Activated T-helper 1 cell treated with anti-CD3 and anti-CD28 coated beads, Interleukin-12 subunit alpha, Interleukin-12 subunit beta, Interleukin-2, Interleukin-4 antibody, amounts not matched to agents 30 ng/mL and 10 ng/mL and 1 ng/mL, durations not matched to agents 14 hours and 24 hours and 36 hours (primary cell): ENCODE measurements at regions of chr2 and their contacts with region 1.

Region 1: DNA sequence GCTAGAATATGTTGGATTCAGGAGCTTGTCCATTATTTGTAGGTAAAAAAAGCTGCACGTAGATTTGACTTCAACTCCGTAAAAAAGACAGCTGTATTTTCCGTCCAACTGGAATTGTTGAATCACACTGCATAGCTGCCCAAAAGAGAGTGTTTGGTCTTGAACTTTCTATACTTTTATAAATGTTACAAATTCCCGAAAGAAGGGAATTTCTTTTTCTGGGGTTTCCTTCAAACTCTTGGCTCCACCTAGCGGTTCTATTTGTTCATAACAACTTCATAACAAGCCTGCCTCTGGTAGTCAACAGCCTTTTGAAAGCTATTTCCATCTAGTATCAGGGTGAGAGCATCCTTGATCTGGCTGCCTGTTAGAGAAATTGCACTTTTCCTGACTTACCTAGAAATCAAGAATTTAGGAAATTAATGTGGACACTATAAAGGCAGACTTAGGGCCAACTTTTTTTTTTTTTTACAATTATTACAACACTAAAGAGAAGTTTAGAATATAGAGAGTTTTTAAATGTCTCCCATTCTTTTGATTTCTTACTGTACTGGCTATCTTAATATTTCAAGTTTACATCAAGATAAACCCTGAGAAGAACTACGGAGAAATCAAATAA is 48.1 kb downstream of the TMEM185B start:
- DNase-seq: peak; percentile 18
- H3K4me3 Mint-ChIP-seq: no peak overlapping the region
- H3K27ac Mint-ChIP-seq: no peak overlapping the region
- H3K4me1 Mint-ChIP-seq: peaks cover 47% of the 10 kb centered on the region
- H3K27me3 Mint-ChIP-seq: peaks cover 7% of the 10 kb centered on the region

Region 2: DNA sequence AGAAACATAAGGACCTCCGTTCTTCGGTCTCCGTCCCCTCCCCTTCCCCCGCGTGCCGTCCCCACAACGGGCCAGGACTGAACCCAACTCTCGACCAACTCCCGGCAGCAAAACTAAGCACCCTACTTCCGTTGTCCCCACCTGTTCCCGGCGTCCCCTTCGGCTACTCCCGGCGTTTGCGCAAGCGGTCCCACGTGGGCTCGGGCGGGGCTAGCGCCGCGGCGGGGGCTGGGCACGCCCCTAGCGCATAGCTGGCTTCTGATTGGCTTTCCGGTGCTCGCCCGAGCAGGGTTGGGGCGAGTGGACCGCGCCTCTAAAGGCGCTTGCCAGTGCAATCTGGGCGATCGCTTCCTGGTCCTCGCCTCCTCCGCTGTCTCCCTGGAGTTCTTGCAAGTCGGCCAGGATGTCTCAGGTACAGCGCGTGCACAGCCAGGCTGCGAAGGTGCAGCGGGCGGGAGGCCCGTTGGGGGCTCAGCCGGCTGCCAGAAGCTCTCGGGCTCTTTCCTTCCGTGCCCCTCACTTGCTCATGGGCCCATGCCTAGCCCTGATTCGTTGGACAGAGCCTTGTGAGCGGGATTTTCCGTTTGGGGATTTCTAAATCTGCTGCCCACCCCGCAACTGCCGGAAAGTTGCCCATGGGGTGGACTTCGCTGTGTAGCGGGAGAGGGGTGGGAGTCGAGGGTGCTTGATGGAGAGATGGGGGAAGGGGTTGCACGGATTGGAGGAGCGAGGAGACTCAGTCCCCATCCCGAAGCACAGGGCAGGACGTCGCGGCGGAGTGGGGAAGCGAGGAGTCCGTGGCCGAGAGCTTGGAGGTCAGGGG is 808.2 kb before region 1 on chr2 and contains the starts of genes C2orf76 and DBI:
- intact Hi-C with region 1: loop called (anchors 5 kb)
- DNase-seq: peak; percentile 93
- H3K4me3 Mint-ChIP-seq: peak within 1 kb of the TSS; percentile 99
- H3K27ac Mint-ChIP-seq: peak within 1 kb of the TSS; percentile 99
- H3K4me1 Mint-ChIP-seq: peaks cover 46% of the 10 kb centered on the region
- H3K27me3 Mint-ChIP-seq: no peaks in the 10 kb centered on the region
- total RNA-seq, gene C2orf76: 10.3 and 10.7 TPM in 2 replicates
- total RNA-seq, gene DBI: 142 and 146 TPM in 2 replicates

Region 3: GRCh38 chr2:119702918-119703401 is 472.1 kb before region 1 on chr2:
- intact Hi-C with region 1: loop called (anchors 1 kb)
- DNase-seq: peak; percentile 56
- H3K4me3 Mint-ChIP-seq: no peak overlapping the region
- H3K27ac Mint-ChIP-seq: no peak overlapping the region
- H3K4me1 Mint-ChIP-seq: peaks cover 3% of the 10 kb centered on the region
- H3K27me3 Mint-ChIP-seq: peaks cover 2% of the 10 kb centered on the region

Region 4: GRCh38 chr2:119826370-119826961 is 348.6 kb before region 1 on chr2:
- intact Hi-C with region 1: loop called (anchors 2 kb)
- DNase-seq: peak; percentile 19
- H3K4me3 Mint-ChIP-seq: no peak overlapping the region
- H3K27ac Mint-ChIP-seq: no peak overlapping the region
- H3K4me1 Mint-ChIP-seq: peaks cover 17% of the 10 kb centered on the region
- H3K27me3 Mint-ChIP-seq: no peaks in the 10 kb centered on the region

Region 5: GRCh38 chr2:120037995-120038541 is 137.0 kb before region 1 on chr2:
- intact Hi-C with region 1: no loop called
- DNase-seq: no peak
- H3K4me3 Mint-ChIP-seq: no peak overlapping the region
- H3K27ac Mint-ChIP-seq: no peak overlapping the region
- H3K4me1 Mint-ChIP-seq: no peaks in the 10 kb centered on the region
- H3K27me3 Mint-ChIP-seq: peaks cover 5% of the 10 kb centered on the region

Region 6: GRCh38 chr2:120109186-120110061 is 65.6 kb before region 1 on chr2:
- intact Hi-C with region 1: loop called (anchors 1 kb)
- DNase-seq: peak; percentile 13
- H3K4me3 Mint-ChIP-seq: peak overlapping the region; percentile 29
- H3K27ac Mint-ChIP-seq: no peak overlapping the region
- H3K4me1 Mint-ChIP-seq: peaks cover 16% of the 10 kb centered on the region
- H3K27me3 Mint-ChIP-seq: peaks cover 14% of the 10 kb centered on the region

Region 7: GRCh38 chr2:120252225-120253021 is 77.4 kb after region 1 on chr2 and contains the start of gene RALB:
- intact Hi-C with region 1: loop called (anchors 1 kb)
- DNase-seq: peak; percentile 99
- H3K4me3 Mint-ChIP-seq: peak within 1 kb of the TSS; percentile 98
- H3K27ac Mint-ChIP-seq: peak within 1 kb of the TSS; percentile 95
- H3K4me1 Mint-ChIP-seq: peaks cover 85% of the 10 kb centered on the region
- H3K27me3 Mint-ChIP-seq: peaks cover 10% of the 10 kb centered on the region
- total RNA-seq, gene RALB: 79.7 and 84.2 TPM in 2 replicates